B cell (primary cell): ENCODE measurements at regions of chr10 and their contacts with region 1.

Region 1: GRCh38 chr10:96292971-96293920 is 11.0 kb upstream of the DNTT start:
- DNase-seq: peak; percentile 76
- ATAC-seq: peak; percentile 67
- H3K4me3 ChIP-seq: no peak overlapping the region
- H3K4me3 Mint-ChIP-seq: no peak overlapping the region
- H3K27ac ChIP-seq: peak overlapping the region in 1 of 2 donors; percentile 4
- H3K27ac Mint-ChIP-seq: no peak overlapping the region
- H3K4me1 ChIP-seq: peaks cover 49 to 52% of the 10 kb centered on the region in 2 donors
- H3K4me1 Mint-ChIP-seq: peaks cover 58% of the 10 kb centered on the region
- H3K27me3 ChIP-seq: no peaks in the 10 kb centered on the region
- H3K27me3 Mint-ChIP-seq: no peaks in the 10 kb centered on the region
- CTCF ChIP-seq: peak; percentile 84

Region 2: DNA sequence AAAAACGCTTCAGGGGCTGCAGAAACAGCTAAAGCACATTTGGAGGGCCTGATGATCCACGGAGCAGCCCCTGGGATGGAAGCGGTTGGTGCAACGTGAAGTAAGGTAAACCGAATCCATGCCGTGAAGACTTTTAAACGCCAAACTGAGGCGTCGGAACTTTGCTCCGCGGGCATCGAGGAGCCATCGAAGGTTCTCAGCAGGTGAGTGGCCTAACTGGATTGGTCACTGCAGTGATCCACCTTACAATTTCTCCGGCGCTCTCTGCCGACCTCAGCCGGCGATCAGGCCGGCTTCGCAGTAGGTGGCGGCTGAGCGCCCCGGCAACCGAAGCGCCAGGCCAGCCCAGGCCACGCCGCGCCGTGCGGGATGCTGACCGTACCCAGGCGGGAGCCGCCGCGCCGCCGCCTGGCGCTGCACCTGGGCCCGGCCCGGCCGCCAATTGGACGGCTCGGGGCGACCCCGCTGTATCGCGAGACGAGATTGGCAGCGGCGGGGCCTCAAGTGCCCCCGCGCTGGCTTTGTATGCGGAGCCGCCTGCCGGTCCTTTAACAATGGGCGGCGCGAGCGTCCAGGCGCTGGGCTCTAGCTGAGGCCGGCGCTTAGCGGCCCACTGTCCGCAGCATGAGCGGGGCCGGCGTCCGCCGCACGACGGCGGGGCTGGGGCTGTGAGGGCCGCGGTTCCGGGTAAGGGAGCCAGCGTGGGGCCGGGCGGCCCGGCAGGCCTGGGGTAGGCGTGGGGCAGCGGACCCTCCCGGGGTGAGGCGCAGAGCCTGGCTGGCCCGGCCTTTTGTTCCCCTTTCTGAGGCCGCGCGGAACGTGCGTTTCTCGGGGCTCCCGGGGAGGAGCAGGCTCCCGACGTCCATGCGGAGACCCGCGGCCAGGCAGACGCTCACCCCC is 250.0 kb before region 1 on chr10 and contains the start of gene CCNJ:
- CTCF ChIA-PET with region 1: interaction called, 3 read pairs
- POLR2A ChIA-PET with region 1: no interaction called
- intact Hi-C with region 1: loop called (anchors 10 kb)
- DNase-seq: peak; percentile 91
- ATAC-seq: peak; percentile 85
- H3K4me3 ChIP-seq: peak within 1 kb of the TSS; percentile 56 to 83 (median 73)
- H3K4me3 Mint-ChIP-seq: peak within 1 kb of the TSS; percentile 96
- H3K27ac ChIP-seq: peak within 1 kb of the TSS; percentile 54 to 84
- H3K27ac Mint-ChIP-seq: peak within 1 kb of the TSS; percentile 88
- H3K4me1 ChIP-seq: peaks cover 11 to 14% of the 10 kb centered on the region in 2 donors
- H3K4me1 Mint-ChIP-seq: peaks cover 37% of the 10 kb centered on the region
- H3K27me3 ChIP-seq: peaks cover 0 to 5% (median 0%) of the 10 kb centered on the region in 4 experiments
- H3K27me3 Mint-ChIP-seq: no peaks in the 10 kb centered on the region
- CTCF ChIP-seq: peak; percentile 3
- total RNA-seq, gene CCNJ: 8.9 and 9.1 TPM in 2 replicates

Region 3: GRCh38 chr10:96229568-96230030 is 63.6 kb before region 1 on chr10:
- CTCF ChIA-PET with region 1: interaction called, 964 read pairs
- POLR2A ChIA-PET with region 1: interaction called, 37 read pairs
- intact Hi-C with region 1: loop called (anchors 1 kb)
- DNase-seq: peak; percentile 91
- ATAC-seq: peak; percentile 72
- H3K4me3 ChIP-seq: no peak overlapping the region
- H3K4me3 Mint-ChIP-seq: peak overlapping the region; percentile 14
- H3K27ac ChIP-seq: peak overlapping the region; percentile 55 to 77
- H3K27ac Mint-ChIP-seq: peak overlapping the region; percentile 90
- H3K4me1 ChIP-seq: peaks cover 21 to 34% of the 10 kb centered on the region in 2 donors
- H3K4me1 Mint-ChIP-seq: peaks cover 44% of the 10 kb centered on the region
- H3K27me3 ChIP-seq: no peaks in the 10 kb centered on the region
- H3K27me3 Mint-ChIP-seq: no peaks in the 10 kb centered on the region
- CTCF ChIP-seq: peak; percentile 84

Region 4: GRCh38 chr10:96250349-96250748 is 42.9 kb before region 1 on chr10:
- CTCF ChIA-PET with region 1: interaction called, 46 read pairs
- POLR2A ChIA-PET with region 1: no interaction called
- intact Hi-C with region 1: no loop called
- DNase-seq: no peak
- ATAC-seq: no peak
- H3K4me3 ChIP-seq: no peak overlapping the region
- H3K4me3 Mint-ChIP-seq: no peak overlapping the region
- H3K27ac ChIP-seq: peak overlapping the region in 1 of 2 donors; percentile 90
- H3K27ac Mint-ChIP-seq: peak overlapping the region; percentile 86
- H3K4me1 ChIP-seq: peaks cover 35 to 47% of the 10 kb centered on the region in 2 donors
- H3K4me1 Mint-ChIP-seq: peaks cover 66% of the 10 kb centered on the region
- H3K27me3 ChIP-seq: no peaks in the 10 kb centered on the region
- H3K27me3 Mint-ChIP-seq: no peaks in the 10 kb centered on the region
- CTCF ChIP-seq: no peak

Region 5: GRCh38 chr10:96263669-96264068 is 29.6 kb before region 1 on chr10:
- CTCF ChIA-PET with region 1: interaction called, 122 read pairs
- POLR2A ChIA-PET with region 1: no interaction called
- intact Hi-C with region 1: no loop called
- DNase-seq: no peak
- ATAC-seq: peak; percentile 22
- H3K4me3 ChIP-seq: peak overlapping the region in 1 of 5 experiments; percentile 20
- H3K4me3 Mint-ChIP-seq: peak overlapping the region; percentile 56
- H3K27ac ChIP-seq: peak overlapping the region; percentile 20 to 79
- H3K27ac Mint-ChIP-seq: peak overlapping the region; percentile 73
- H3K4me1 ChIP-seq: peaks cover 91 to 97% of the 10 kb centered on the region in 2 donors
- H3K4me1 Mint-ChIP-seq: peaks cover 89% of the 10 kb centered on the region
- H3K27me3 ChIP-seq: no peaks in the 10 kb centered on the region
- H3K27me3 Mint-ChIP-seq: no peaks in the 10 kb centered on the region
- CTCF ChIP-seq: no peak

Region 6: DNA sequence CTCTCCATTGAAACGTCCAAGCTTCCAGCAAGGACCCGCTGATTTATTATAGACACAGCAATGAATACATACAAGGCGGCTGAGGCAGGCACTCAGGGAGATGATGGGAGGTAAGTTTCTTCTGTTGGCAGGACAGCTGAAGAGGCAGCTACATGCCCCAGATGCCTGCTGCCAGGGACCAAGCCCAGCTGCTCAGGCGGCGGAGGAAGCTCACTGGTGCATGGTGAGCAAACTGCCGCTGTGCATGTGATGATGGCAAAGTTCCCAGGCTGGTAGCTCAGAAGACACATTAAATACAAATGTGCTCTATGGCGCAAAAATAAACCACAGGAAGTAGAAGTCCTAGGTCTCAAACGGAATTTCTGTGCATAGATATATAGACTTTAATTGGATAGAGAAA is 13.3 kb after region 1 on chr10:
- CTCF ChIA-PET with region 1: interaction called, 38 read pairs
- POLR2A ChIA-PET with region 1: no interaction called
- intact Hi-C with region 1: loop called (anchors 2 kb)
- DNase-seq: peak; percentile 75
- ATAC-seq: peak; percentile 95
- H3K4me3 ChIP-seq: no peak overlapping the region
- H3K4me3 Mint-ChIP-seq: peak overlapping the region; percentile 53
- H3K27ac ChIP-seq: no peak overlapping the region
- H3K27ac Mint-ChIP-seq: no peak overlapping the region
- H3K4me1 ChIP-seq: peaks cover 25 to 27% of the 10 kb centered on the region in 2 donors
- H3K4me1 Mint-ChIP-seq: peaks cover 26% of the 10 kb centered on the region
- H3K27me3 ChIP-seq: peaks cover 0 to 23% (median 11%) of the 10 kb centered on the region in 4 experiments
- H3K27me3 Mint-ChIP-seq: peaks cover 34% of the 10 kb centered on the region
- CTCF ChIP-seq: no peak

Region 7: DNA sequence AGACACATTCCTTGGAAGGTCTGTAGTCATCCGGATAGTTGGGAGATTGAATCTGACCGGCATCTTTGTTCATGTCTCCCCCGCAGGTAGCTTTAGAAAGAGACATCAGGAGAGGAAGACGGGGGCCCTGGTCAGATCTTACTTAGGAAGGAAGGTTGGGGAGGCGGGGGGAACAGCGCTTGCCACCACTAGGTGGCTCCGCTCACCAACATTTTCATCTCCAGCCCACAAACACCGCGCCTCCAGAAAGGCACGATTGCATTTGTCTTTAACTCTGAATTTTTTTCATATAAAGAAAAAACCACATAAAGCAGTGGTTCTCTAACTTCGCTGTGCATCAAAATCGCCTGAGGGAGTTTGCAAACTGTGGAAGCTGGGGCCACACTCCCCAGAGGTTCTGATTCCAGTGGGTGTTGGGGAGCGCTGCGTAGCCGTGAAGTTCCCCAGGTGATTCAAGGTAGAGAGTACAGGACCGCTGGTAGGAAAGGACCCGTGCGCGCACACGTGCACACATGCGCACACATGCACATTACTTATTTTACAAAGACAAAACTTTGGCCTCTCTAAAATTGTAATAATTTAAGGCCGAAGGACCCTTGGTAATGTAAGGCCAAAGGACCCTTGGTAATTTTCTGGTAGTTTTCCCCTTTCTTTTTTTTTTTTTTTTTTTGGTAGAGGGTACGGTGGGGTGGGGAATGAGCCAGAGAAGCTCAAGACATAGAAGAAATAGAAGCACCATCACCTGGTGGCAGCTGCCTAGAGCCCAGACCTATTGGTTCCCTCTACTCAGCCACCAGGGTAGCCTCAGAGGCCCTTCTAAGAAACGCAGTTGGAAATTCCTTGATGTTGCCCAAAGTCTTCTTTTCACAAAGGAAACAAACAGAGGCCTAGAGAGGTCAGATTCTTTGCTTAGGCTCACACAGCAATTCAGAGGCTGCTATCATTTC is 103.0 kb after region 1 on chr10:
- CTCF ChIA-PET with region 1: no interaction called
- POLR2A ChIA-PET with region 1: no interaction called
- intact Hi-C with region 1: no loop called
- DNase-seq: peak; percentile 78
- ATAC-seq: peak; percentile 76
- H3K4me3 ChIP-seq: no peak overlapping the region
- H3K4me3 Mint-ChIP-seq: no peak overlapping the region
- H3K27ac ChIP-seq: no peak overlapping the region
- H3K27ac Mint-ChIP-seq: no peak overlapping the region
- H3K4me1 ChIP-seq: peaks cover 0 to 7% of the 10 kb centered on the region in 2 donors
- H3K4me1 Mint-ChIP-seq: peaks cover 1% of the 10 kb centered on the region
- H3K27me3 ChIP-seq: peaks cover 0 to 13% (median 5%) of the 10 kb centered on the region in 4 experiments
- H3K27me3 Mint-ChIP-seq: peaks cover 32% of the 10 kb centered on the region
- CTCF ChIP-seq: peak; percentile 91